Colonic mucosa (tissue), 4 donors: ENCODE measurements at regions of chr16 and their contacts with region 1.

Region 1: GRCh38 chr16:10256784-10257641 is 74.8 kb upstream of the GRIN2A start:
- DNase-seq: peak; percentile 27
- H3K4me3 ChIP-seq: no peak overlapping the region
- H3K27ac ChIP-seq: no peak overlapping the region
- H3K4me1 ChIP-seq: no peaks in the 10 kb centered on the region
- H3K27me3 ChIP-seq: no peaks in the 10 kb centered on the region
- CTCF ChIP-seq: peak; percentile 63

Region 2: GRCh38 chr16:10136916-10137315 is 120.1 kb before region 1 on chr16:
- intact Hi-C with region 1: no loop called
- DNase-seq: no peak
- H3K4me3 ChIP-seq: no peak overlapping the region
- H3K27ac ChIP-seq: no peak overlapping the region
- H3K4me1 ChIP-seq: no peaks in the 10 kb centered on the region
- H3K27me3 ChIP-seq: no peaks in the 10 kb centered on the region
- CTCF ChIP-seq: no peak

Region 3: DNA sequence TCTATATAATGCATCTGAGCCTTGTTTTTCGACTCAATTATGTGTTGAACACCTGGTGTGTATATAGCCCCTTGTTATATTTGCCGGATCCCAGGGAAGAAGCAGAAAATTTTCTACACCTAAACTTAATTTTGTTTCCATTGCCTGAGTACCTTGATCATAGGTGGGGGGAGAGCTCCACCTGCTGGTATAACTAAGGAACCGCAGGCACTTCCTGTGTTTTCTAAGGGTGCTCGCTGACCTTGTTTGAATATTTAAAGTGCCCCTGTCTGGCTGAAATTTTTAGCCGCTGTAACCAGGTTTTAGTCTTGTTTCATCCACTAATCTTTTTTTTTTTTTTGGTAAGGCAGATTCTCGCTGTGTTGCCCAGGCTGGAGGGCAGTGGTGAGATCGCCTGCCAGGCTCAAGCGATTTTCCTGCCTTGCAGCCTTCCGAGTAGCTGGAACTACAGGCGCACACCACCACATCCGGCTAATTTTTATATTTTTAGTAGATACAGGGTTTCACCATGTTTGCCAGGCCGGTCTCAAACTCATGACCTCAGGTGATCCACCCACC is 480.1 kb after region 1 on chr16:
- intact Hi-C with region 1: loop called (anchors 10 kb)
- DNase-seq: peak; percentile 78
- H3K4me3 ChIP-seq: peak overlapping the region; percentile 20
- H3K27ac ChIP-seq: peak overlapping the region; percentile 46
- H3K4me1 ChIP-seq: no peaks in the 10 kb centered on the region
- H3K27me3 ChIP-seq: no peaks in the 10 kb centered on the region
- CTCF ChIP-seq: peak; percentile 88